Lower lobe of right lung (tissue), 2 donors: ENCODE measurements at regions of chr22 and their contacts with region 1.

Region 1: DNA sequence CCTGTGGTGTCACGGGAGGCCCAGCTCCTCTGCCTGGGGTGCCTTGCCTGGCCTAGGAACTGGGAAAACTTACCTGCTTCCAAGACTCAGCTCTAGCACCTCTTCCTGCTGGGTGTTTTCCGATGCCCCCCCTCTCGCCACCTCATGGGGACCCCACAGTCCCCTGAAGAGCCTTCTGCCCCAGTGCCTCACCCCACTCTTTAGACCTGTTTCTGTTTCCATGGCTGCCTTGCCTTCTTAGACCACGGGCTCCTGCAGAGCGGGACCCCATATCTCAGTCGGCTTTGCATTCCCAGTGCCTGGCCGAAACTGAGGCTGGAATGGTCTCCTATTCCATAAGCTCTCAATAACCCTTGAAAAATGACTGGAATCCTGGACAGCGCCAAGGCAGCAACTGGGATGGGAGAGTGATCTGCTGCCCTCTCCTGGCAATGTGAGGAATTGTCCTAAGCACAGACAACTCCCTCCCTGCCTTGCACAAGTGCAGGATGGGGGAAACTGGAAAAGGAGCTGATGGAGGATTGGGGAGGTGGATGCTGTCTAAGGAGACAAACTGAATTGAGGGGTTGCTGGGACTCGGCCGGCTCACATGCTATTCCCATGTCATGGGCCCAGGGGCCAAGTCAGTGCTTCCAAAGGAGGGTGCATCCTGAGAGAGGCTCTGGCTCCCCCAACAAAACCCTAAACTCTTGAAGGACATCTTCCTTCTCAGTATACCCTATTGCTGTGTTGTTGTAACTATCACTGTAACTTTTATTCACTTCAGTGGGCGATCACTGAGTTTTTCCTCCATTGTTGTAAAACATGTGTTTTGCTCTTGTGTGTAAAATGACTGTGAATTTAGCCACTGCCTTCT is 26.6 kb upstream of the IL17RA start:
- DNase-seq: peak; percentile 56
- ATAC-seq: peak; percentile 86 to 87
- H3K4me3 ChIP-seq: no peak overlapping the region
- H3K27ac ChIP-seq: no peak overlapping the region
- H3K4me1 ChIP-seq: peaks cover 5% of the 10 kb centered on the region
- H3K27me3 ChIP-seq: no peaks in the 10 kb centered on the region
- CTCF ChIP-seq: peak; percentile 90

Region 2: DNA sequence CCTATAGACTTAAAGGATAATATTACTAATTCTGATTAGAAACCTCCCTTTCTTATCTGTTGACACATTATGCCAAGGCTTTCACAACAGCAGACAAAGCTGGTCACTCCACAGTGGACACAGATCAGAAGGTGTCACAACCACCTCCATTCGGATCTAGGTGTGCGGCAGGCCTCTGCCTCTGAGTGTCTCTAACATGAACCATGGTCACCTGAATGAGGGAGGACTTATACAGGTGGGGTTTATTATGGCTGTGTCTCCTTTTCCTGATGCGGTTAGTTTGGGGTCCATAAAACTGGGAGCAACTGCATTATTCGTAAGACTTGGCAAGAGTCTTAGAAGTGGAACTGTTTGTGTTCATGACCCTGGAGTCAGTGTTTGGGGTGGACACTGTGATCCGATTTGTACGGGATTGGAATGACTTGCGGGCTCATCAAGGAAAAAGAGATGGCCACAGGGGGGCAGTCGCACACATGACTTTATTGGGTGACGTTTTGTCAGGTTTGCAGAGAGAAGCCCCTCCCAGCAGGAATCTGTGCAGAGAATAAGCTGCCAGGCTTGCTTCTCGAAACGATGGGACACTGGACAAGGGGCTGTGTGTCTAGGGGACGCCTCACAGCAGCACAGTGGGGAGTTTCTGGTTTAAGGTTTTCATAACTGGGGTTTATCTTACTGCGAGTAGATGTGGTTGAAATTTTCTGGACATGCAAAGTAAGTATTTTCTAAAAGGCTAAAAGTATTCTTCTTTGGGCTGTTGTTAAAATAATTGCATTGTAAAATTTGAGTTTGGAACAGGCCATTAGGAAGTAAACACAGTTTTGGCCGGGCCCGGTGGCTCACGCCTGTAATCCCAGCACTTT is 140.8 kb before region 1 on chr22:
- intact Hi-C with region 1: loop called (anchors 10 kb)
- DNase-seq: peak; percentile 64
- ATAC-seq: peak; percentile 64 to 74
- H3K4me3 ChIP-seq: no peak overlapping the region
- H3K27ac ChIP-seq: no peak overlapping the region
- H3K4me1 ChIP-seq: no peaks in the 10 kb centered on the region
- H3K27me3 ChIP-seq: peaks cover 38% of the 10 kb centered on the region
- CTCF ChIP-seq: peak; percentile 61

Region 3: DNA sequence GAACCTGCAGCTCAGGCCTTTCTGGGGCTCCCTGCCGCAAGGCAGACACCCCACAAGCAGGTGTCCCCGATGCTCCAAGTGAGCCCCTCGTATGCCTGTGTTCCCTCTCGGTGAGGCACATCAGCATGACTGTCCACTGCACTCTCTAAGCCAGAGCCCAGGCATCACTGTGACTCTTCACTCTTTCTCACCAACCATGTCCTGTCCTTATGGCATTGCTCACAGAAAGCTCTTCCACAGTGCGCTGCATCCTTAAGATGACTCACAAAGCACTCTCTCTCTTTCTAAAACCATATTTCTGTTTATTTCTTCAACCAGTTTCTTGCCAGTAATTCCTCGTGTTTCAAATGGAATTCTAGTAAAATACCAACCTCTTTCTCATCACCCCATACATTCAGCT is 68.3 kb before region 1 on chr22:
- intact Hi-C with region 1: no loop called
- DNase-seq: no peak
- ATAC-seq: no peak
- H3K4me3 ChIP-seq: no peak overlapping the region
- H3K27ac ChIP-seq: no peak overlapping the region
- H3K4me1 ChIP-seq: no peaks in the 10 kb centered on the region
- H3K27me3 ChIP-seq: no peaks in the 10 kb centered on the region
- CTCF ChIP-seq: no peak

Region 4: DNA sequence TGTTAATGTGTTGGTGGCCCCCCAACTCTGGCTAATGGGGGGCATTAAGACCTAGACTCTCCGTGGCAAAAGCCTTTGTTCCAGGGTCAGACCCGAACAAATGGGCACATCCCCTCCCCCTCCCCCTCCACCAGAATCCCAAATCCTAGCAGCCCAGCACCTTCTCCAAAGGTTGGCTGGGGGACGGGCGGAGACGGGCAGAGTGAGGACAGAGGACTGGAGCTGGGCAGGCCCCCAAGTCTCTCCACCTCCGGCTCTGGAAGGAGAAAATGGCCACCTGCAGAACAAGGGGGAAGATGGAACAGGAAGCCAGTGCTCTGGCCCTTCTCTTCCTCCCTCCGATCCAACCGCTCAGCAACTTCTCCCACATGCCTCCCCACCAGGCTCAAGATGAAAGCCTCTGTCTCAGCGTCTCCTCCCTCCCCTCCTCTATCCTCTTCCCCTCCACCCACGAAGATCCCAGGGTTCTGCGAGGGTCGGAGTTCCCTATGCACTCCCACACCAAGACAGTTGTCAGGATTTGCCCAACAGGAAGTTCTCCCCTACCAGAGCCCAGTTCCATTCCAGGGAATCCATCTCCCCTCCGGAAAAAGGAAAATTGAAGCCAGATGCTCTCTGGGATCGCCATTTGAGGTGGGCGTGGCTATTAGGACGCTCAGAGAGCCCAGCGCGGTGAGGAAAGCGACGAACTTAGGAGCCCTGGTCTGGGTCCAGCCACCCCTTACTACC is 141.0 kb after region 1 on chr22:
- intact Hi-C with region 1: no loop called
- DNase-seq: no peak
- ATAC-seq: peak; percentile 53 to 64
- H3K4me3 ChIP-seq: peak overlapping the region; percentile 37
- H3K27ac ChIP-seq: peak overlapping the region; percentile 80
- H3K4me1 ChIP-seq: peaks cover 4% of the 10 kb centered on the region
- H3K27me3 ChIP-seq: no peaks in the 10 kb centered on the region
- CTCF ChIP-seq: no peak